Posterior vena cava (tissue), 2 donors: ENCODE measurements at regions of chr1 and their contacts with region 1.

Region 1: DNA sequence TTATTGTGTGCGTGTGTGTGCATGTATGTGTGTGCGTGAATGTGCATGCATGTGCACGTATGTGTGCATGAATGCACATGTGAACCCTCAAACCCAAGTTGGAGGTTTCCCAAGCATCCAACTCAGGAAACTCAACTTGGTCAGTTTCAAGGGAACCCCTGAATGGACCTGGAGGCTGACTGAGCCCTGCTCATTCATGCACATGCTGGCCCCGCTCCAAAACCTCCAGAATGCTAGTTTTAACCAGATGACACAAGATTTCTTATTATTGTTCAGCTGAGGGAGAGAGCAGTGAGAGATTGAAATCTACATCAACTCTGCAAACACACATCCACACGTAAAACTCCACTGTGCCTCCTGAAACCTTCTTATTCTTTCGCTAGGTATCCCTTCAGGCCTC is 104.4 kb downstream of the OMA1 start:
- DNase-seq: no peak

Region 2: GRCh38 chr1:56973923-56974742 is 1468.0 kb before region 1 on chr1:
- intact Hi-C with region 1: loop called in 1 of 2 experiments (anchors 5 kb)
- DNase-seq: no peak

Region 3: GRCh38 chr1:58324558-58324957 is 117.6 kb before region 1 on chr1:
- intact Hi-C with region 1: no loop called
- DNase-seq: no peak